Activated naive CD4-positive, alpha-beta T cell treated with anti-CD3 and anti-CD28 coated beads for 36 hours (primary cell): ENCODE measurements at regions of chr21 and their contacts with region 1.

Region 1: DNA sequence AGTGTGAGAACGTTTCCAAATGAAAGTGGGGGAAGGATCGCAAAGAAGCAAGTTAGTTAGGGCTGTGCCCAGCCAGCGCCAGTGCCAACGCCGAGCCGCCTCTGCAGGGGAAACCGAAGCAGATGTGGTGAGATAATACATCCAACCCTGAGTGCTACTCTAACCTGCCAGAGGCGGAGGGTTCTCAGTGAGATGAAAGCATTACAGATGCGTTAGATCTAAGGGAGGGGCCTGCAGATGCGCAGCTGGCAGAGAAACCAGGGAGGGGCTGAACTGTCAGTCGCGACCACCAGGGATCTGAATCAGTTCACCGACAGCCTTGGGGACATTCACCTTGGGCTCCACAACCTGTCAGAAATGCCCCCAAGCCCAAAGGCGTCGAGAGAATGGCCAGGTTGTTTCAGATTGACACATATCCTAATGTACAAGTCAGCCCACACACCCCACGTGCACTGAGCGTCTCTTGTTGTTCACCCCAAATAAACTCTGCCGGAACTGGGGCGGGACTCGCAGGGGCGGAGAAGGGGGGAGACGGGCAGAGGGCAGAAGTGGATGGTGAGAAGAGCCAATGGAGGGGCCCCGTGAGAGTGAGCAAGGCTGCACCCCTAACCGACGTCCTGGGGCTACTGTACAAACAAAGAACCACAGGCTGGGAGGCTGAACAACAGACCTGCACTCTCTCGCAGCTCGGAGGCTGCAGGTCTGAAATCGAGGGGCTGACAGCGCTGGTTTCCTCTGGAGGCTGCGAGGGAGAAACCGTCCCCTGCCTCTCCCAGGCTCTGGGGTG is 8.7 kb upstream of the UMODL1 start:
- DNase-seq: peak; percentile 84
- H3K4me3 Mint-ChIP-seq: peak overlapping the region; percentile 14
- H3K27ac Mint-ChIP-seq: peak overlapping the region; percentile 30
- H3K4me1 Mint-ChIP-seq: peaks cover 49% of the 10 kb centered on the region
- H3K27me3 Mint-ChIP-seq: no peaks in the 10 kb centered on the region

Region 2: DNA sequence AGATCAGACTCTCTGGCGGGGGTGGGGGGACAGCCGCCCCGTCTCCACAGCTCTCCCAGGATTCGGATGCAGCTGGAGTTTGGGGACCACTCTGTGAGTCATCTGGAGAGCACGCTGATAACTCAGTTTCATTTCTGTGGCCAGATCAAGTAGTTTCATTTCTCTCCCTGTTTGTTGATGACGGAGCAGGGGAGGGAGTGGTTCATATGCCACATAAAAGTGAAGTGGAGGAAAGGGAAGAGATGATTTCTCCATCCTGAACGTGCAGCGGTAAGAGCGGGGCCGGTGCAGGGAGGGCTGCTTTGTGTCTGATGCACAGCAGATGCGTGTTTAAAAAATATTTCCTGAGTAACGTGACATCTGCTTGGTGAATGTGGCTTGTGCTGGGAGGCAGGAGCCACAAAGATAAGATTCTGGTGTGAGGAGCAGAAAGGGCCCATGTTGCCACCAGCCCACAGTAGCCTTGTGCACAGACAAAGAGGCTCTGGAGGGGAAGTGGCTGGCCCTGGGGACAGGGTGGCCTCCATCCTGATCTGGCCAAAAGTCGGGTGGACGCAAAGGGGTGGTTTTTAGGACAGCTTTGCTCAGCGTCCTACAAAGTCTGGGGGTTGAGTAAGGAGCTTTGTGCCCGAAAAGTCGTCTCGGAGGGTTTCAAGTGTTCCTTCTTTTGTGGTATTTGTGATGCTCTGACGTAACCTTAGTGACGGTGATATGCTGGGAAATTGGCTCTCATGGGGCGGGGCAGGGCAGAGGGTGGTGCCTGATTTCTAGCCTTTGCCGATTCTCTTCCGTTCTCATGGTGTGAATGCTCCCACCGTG is 700.4 kb before region 1 on chr21 and contains the start of gene MX2:
- CTCF ChIA-PET with region 1: no interaction called
- intact Hi-C with region 1: loop called (anchors 5 kb)
- DNase-seq: peak; percentile 89
- H3K4me3 Mint-ChIP-seq: peak within 1 kb of the TSS; percentile 80
- H3K27ac Mint-ChIP-seq: peak within 1 kb of the TSS; percentile 97
- H3K4me1 Mint-ChIP-seq: peaks cover 57% of the 10 kb centered on the region
- H3K27me3 Mint-ChIP-seq: no peaks in the 10 kb centered on the region
- total RNA-seq, gene MX2: 32.5 to 33.4 TPM

Region 3: GRCh38 chr21:41895643-41896493 is 166.6 kb before region 1 on chr21:
- CTCF ChIA-PET with region 1: no interaction called
- intact Hi-C with region 1: loop called (anchors 1 kb)
- DNase-seq: peak; percentile 78
- H3K4me3 Mint-ChIP-seq: no peak overlapping the region
- H3K27ac Mint-ChIP-seq: no peak overlapping the region
- H3K4me1 Mint-ChIP-seq: peaks cover 22% of the 10 kb centered on the region
- H3K27me3 Mint-ChIP-seq: no peaks in the 10 kb centered on the region

Region 4: GRCh38 chr21:42002421-42002958 is 59.9 kb before region 1 on chr21:
- CTCF ChIA-PET with region 1: no interaction called
- intact Hi-C with region 1: loop called (anchors 2 kb)
- DNase-seq: peak; percentile 89
- H3K4me3 Mint-ChIP-seq: peak overlapping the region; percentile 27
- H3K27ac Mint-ChIP-seq: peak overlapping the region; percentile 86
- H3K4me1 Mint-ChIP-seq: peaks cover 62% of the 10 kb centered on the region
- H3K27me3 Mint-ChIP-seq: no peaks in the 10 kb centered on the region

Region 5: DNA sequence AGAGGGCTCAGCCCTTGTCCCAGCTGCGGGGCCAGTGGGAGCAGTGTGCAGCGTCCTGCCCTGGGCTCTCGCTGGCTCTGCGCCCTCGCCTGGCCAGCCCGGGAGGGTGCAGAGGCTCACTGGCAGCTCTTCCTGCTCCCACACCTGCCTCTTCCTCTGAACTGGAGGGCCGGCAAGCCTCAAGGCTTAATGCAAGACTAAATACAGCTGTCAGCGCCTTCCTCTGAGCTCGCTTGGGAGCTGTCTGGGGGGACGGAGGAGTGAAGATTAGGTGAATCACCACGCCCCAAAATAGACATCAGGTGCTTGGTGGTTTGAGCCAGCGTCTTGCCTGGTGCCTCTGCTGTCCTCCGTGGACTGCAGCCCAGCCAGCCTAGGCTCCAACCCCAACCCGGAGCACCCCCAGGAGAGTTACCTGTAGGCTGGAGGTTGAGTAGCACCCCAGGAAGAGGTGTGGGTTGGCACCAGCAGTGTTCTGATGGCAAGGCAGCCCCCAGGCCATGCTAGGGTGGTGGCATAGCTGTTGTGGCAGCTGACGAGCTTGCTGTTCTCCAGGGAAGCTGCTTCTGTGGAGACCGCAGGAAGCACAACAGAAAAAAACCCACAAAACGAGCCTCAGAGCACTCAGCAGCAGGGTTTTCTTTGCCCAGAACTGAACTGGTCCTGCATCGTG is 45.6 kb after region 1 on chr21:
- CTCF ChIA-PET with region 1: interaction called, 14 read pairs
- intact Hi-C with region 1: loop called (anchors 2 kb)
- DNase-seq: peak; percentile 71
- H3K4me3 Mint-ChIP-seq: peak overlapping the region; percentile 20
- H3K27ac Mint-ChIP-seq: no peak overlapping the region
- H3K4me1 Mint-ChIP-seq: peaks cover 5% of the 10 kb centered on the region
- H3K27me3 Mint-ChIP-seq: no peaks in the 10 kb centered on the region

Region 6: GRCh38 chr21:42238185-42238934 is 175.9 kb after region 1 on chr21:
- CTCF ChIA-PET with region 1: interaction called, 3 read pairs
- intact Hi-C with region 1: loop called (anchors 2 kb)
- DNase-seq: peak; percentile 66
- H3K4me3 Mint-ChIP-seq: peak overlapping the region; percentile 13
- H3K27ac Mint-ChIP-seq: peak overlapping the region; percentile 95
- H3K4me1 Mint-ChIP-seq: peaks cover 53% of the 10 kb centered on the region
- H3K27me3 Mint-ChIP-seq: no peaks in the 10 kb centered on the region